ENCODE measurements at regions of chr19 and their contacts with region 1.

Region 1: GRCh38 chr19:13117772-13118423 is at the start of gene NACC1:
- DNase-seq: peak; percentile 81 to 94 (median 89)
- ATAC-seq: peak; percentile 95
- H3K4me3 ChIP-seq: peak within 1 kb of the TSS; percentile 97
- H3K4me3 Mint-ChIP-seq: peak within 1 kb of the TSS; percentile 86 to 99 (median 97)
- H3K27ac ChIP-seq: peak within 1 kb of the TSS; percentile 84
- H3K27ac Mint-ChIP-seq: peak within 1 kb of the TSS; percentile 85 to 96 (median 91)
- H3K4me1 ChIP-seq: peaks cover 25 to 30% of the 10 kb centered on the region in 2 donors
- H3K4me1 Mint-ChIP-seq: peaks cover 16 to 64% (median 49%) of the 10 kb centered on the region in 7 donors
- H3K27me3 ChIP-seq: no peaks in the 10 kb centered on the region
- H3K27me3 Mint-ChIP-seq: no peaks in the 10 kb centered on the region
- total RNA-seq, gene NACC1: 18.0 to 72.7 (median 22.4) TPM

Region 2: DNA sequence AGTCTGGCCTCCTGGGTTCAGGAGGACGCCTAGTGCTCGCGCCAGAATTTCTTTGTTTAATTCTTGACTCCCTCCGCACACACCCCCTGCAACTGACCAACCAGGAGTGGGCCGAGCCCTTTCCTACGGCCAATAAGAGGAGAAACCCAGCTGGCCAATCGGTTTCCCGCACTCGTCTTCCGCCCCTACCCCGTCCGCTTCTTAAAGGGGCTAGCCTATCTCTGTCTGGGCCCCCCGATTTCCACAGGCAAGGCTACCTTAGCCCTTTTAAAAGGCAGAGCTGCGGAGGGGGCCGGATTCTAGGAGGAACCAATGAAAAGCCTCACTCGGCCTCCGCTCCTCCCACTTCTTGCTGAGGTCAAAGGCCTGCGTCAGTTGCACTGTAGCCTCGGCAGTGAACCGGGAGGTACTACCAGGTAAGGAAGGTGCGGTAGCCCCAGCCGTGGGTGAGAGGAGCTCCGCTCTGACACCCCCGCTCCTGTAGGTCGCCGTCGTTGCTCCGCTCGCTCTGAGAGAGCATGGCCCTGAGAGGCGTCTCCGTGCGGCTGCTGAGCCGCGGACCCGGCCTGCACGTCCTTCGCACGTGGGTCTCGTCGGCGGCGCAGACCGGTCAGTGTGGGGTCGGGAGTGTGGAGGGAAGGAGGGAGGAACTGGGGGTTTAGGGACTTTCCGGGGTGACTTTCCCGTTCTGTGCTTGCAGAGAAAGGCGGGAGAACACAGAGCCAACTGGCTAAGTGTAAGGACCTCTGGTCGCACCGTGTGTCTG is 226.9 kb before region 1 on chr19 and contains the start of gene GCDH:
- CTCF ChIA-PET with region 1: no interaction called
- POLR2A ChIA-PET with region 1: no interaction called
- intact Hi-C with region 1: loop called (anchors 2 kb)
- DNase-seq: peak; percentile 77 to 98 (median 96)
- ATAC-seq: peak; percentile 97
- H3K4me3 ChIP-seq: peak within 1 kb of the TSS; percentile 87
- H3K4me3 Mint-ChIP-seq: peak within 1 kb of the TSS; percentile 91 to 100 (median 99)
- H3K27ac ChIP-seq: peak within 1 kb of the TSS; percentile 83
- H3K27ac Mint-ChIP-seq: peak within 1 kb of the TSS; percentile 94 to 99 (median 98)
- H3K4me1 ChIP-seq: peaks cover 5 to 15% of the 10 kb centered on the region in 2 donors
- H3K4me1 Mint-ChIP-seq: peaks cover 16 to 41% (median 30%) of the 10 kb centered on the region in 7 donors
- H3K27me3 ChIP-seq: no peaks in the 10 kb centered on the region
- H3K27me3 Mint-ChIP-seq: peaks cover 0 to 6% (median 0%) of the 10 kb centered on the region in 5 donors
- total RNA-seq, gene GCDH: 40.1 to 74.2 (median 54.5) TPM

Region 3: GRCh38 chr19:13104360-13104847 is 13.5 kb before region 1 on chr19:
- CTCF ChIA-PET with region 1: interaction called, 19 read pairs
- POLR2A ChIA-PET with region 1: interaction called, 53 read pairs
- intact Hi-C with region 1: loop called (anchors 1 kb)
- DNase-seq: peak; percentile 48 to 78 (median 62)
- ATAC-seq: peak; percentile 67
- H3K4me3 ChIP-seq: peak overlapping the region; percentile 82
- H3K4me3 Mint-ChIP-seq: peak overlapping the region; percentile 80 to 97 (median 93)
- H3K27ac ChIP-seq: peak overlapping the region; percentile 74
- H3K27ac Mint-ChIP-seq: peak overlapping the region; percentile 71 to 94 (median 87)
- H3K4me1 ChIP-seq: peaks cover 46 to 48% of the 10 kb centered on the region in 2 donors
- H3K4me1 Mint-ChIP-seq: peaks cover 0 to 36% (median 30%) of the 10 kb centered on the region in 7 donors
- H3K27me3 ChIP-seq: no peaks in the 10 kb centered on the region
- H3K27me3 Mint-ChIP-seq: peaks cover 0 to 3% (median 0%) of the 10 kb centered on the region in 5 donors

Region 4: DNA sequence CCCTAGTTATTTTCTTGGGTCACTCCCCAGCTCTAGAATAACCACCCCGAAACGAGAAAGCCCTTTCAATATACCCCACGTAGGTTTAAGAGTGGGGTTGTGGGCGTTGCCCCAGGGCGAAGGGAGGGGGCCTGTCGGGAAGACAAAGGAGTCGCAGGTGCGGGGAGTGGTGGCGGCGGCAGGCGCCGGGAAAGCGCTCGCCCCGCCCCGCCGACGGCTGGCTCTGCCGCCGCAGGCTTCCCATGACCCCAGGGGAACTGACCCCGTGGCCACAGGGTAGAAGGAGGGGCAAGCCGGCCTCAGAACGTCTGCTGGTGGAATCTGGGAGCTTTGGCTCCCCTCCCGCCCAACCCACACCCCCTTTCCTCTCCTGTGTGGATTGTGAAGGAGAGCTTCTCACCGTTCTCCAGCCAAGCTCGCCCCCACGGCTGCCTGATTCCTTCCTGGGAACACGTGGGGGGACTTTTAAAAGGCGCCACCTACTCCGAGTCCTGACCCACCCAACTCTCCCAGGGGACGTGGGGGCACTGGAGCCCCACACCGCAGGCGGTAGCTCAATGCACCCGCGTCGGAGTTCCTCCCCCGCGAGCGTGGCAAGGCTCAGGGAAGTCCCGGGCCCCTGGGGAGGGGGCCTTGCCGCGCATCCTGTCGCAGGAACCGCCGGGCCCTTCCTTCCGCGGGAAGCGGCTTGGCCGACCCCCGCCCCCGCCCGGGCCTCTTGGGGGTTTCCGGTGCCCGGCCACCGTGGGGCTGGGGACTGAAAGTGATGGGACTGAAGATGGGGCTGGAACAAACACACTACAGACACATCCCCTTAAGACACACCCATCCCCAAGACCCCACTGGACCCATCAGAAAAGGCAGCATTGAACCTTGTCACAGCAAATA is 37.8 kb after region 1 on chr19:
- CTCF ChIA-PET with region 1: interaction called, 4 read pairs
- POLR2A ChIA-PET with region 1: interaction called, 36 read pairs
- intact Hi-C with region 1: loop called (anchors 1 kb)
- DNase-seq: peak; percentile 65 to 86 (median 75)
- ATAC-seq: peak; percentile 43
- H3K4me3 ChIP-seq: peak overlapping the region; percentile 96
- H3K4me3 Mint-ChIP-seq: peak overlapping the region; percentile 94 to 100 (median 98)
- H3K27ac ChIP-seq: peak overlapping the region; percentile 96
- H3K27ac Mint-ChIP-seq: peak overlapping the region; percentile 97 to 100 (median 99)
- H3K4me1 ChIP-seq: peaks cover 14 to 29% of the 10 kb centered on the region in 2 donors
- H3K4me1 Mint-ChIP-seq: peaks cover 22 to 63% (median 39%) of the 10 kb centered on the region in 7 donors
- H3K27me3 ChIP-seq: no peaks in the 10 kb centered on the region
- H3K27me3 Mint-ChIP-seq: peaks cover 0 to 17% (median 0%) of the 10 kb centered on the region in 5 donors

Region 5: GRCh38 chr19:13262450-13262849 is 144.6 kb after region 1 on chr19:
- CTCF ChIA-PET with region 1: no interaction called
- POLR2A ChIA-PET with region 1: no interaction called
- intact Hi-C with region 1: loop called in 1 of 2 experiments (anchors 1 kb)
- DNase-seq: peak in 6 of 9 donors; percentile 21 to 61 (median 52)
- ATAC-seq: peak; percentile 73
- H3K4me3 ChIP-seq: no peak overlapping the region
- H3K4me3 Mint-ChIP-seq: no peak overlapping the region
- H3K27ac ChIP-seq: no peak overlapping the region
- H3K27ac Mint-ChIP-seq: peak overlapping the region in 3 of 9 donors; percentile 5 to 84 (median 47)
- H3K4me1 ChIP-seq: no peaks in the 10 kb centered on the region
- H3K4me1 Mint-ChIP-seq: peaks cover 0 to 15% (median 0%) of the 10 kb centered on the region in 7 donors
- H3K27me3 ChIP-seq: no peaks in the 10 kb centered on the region
- H3K27me3 Mint-ChIP-seq: peaks cover 0 to 21% (median 10%) of the 10 kb centered on the region in 5 donors

Region 6: DNA sequence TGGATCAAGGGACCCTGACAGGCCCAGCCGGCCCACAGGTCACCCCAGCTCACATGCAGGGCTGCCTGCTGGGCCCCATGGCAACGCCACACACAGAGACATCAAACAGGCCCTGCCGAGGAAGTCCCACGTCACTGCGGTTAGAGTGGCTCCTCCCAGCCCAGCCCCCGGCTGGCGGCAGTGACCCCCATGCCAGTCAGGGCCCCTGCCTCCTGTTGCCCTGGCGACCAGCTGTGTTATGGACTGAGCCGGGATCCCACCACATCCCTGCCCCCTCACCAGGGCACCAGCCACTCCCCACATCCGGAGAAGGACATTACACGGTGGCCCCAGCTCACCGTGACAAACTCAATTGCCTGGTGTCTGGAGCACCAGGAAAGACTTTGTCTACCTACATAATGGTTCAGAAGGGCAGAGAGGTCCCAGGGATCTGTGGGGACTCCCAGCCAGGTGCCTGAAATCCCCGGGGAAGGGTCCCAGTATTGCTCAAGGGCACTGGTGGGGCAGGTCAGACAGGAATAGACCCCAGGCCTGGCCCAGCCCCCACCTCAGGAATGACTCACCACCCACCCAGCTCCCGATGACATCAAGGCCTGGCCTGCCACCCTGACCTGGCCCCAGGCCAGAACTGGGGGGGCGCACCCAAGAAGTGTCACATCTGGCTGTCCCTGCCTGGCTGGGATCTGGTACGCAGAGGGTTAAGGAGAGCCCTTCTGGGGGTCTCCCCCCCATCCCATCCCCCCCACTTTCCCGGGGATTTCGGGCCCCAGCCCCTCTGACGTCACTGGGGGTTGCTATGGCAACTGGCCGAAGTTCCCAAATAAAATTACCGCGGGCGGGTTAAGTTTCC is 728.9 kb after region 1 on chr19:
- CTCF ChIA-PET with region 1: no interaction called
- POLR2A ChIA-PET with region 1: no interaction called
- intact Hi-C with region 1: loop called in 1 of 2 experiments (anchors 5 kb)
- DNase-seq: peak; percentile 91 to 98 (median 97)
- ATAC-seq: peak; percentile 75
- H3K4me3 ChIP-seq: peak overlapping the region; percentile 72
- H3K4me3 Mint-ChIP-seq: peak overlapping the region; percentile 82 to 96 (median 90)
- H3K27ac ChIP-seq: peak overlapping the region; percentile 95
- H3K27ac Mint-ChIP-seq: peak overlapping the region; percentile 99 to 100 (median 100)
- H3K4me1 ChIP-seq: peaks cover 47 to 55% of the 10 kb centered on the region in 2 donors
- H3K4me1 Mint-ChIP-seq: peaks cover 19 to 62% (median 55%) of the 10 kb centered on the region in 7 donors
- H3K27me3 ChIP-seq: no peaks in the 10 kb centered on the region
- H3K27me3 Mint-ChIP-seq: peaks cover 0 to 3% (median 0%) of the 10 kb centered on the region in 5 donors